MCF 10A (cell line): ENCODE measurements at regions of chr3 and their contacts with region 1.

Region 1: GRCh38 chr3:34260271-34261006 is 462.0 kb downstream of the PDCD6IP start:
- DNase-seq: peak; percentile 61
- H3K4me3 Mint-ChIP-seq: no peak overlapping the region
- H3K27ac Mint-ChIP-seq: no peak overlapping the region
- H3K4me1 Mint-ChIP-seq: peaks cover 6% of the 10 kb centered on the region
- H3K27me3 Mint-ChIP-seq: peaks cover 29% of the 10 kb centered on the region
- CTCF ChIP-seq: peak; percentile 45

Region 2: GRCh38 chr3:33883538-33883950 is 376.9 kb before region 1 on chr3:
- CTCF ChIA-PET with region 1: interaction called, 39 read pairs
- POLR2A ChIA-PET with region 1: no interaction called
- intact Hi-C with region 1: loop called (anchors 1 kb)
- DNase-seq: peak; percentile 67
- H3K4me3 Mint-ChIP-seq: no peak overlapping the region
- H3K27ac Mint-ChIP-seq: no peak overlapping the region
- H3K4me1 Mint-ChIP-seq: peaks cover 9% of the 10 kb centered on the region
- H3K27me3 Mint-ChIP-seq: peaks cover 21% of the 10 kb centered on the region
- CTCF ChIP-seq: peak; percentile 70

Region 3: GRCh38 chr3:34046154-34046553 is 214.3 kb before region 1 on chr3:
- CTCF ChIA-PET with region 1: no interaction called
- POLR2A ChIA-PET with region 1: no interaction called
- intact Hi-C with region 1: no loop called
- DNase-seq: no peak
- H3K4me3 Mint-ChIP-seq: no peak overlapping the region
- H3K27ac Mint-ChIP-seq: no peak overlapping the region
- H3K4me1 Mint-ChIP-seq: no peaks in the 10 kb centered on the region
- H3K27me3 Mint-ChIP-seq: peaks cover 14% of the 10 kb centered on the region
- CTCF ChIP-seq: no peak

Region 4: DNA sequence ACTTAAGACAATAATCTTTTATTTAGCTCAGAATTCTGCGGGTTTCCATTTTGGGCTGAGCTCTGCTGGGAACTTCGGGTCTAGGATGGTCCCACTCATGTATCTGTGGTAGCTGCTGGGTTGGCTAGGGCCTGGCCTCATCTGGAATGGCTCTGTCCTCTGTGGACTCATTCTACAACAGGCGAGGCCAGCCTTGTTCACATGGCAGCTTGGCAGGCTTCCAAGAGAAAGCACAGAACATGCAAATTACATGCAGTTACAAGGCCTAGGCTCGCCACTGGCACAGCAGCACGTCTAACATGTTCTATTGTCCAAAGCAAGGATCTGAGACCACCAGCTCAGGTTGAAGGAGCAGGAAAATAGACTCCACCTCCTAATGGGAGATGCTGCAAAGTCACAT is 30.6 kb before region 1 on chr3:
- CTCF ChIA-PET with region 1: interaction called, 12 read pairs
- POLR2A ChIA-PET with region 1: no interaction called
- intact Hi-C with region 1: no loop called
- DNase-seq: no peak
- H3K4me3 Mint-ChIP-seq: no peak overlapping the region
- H3K27ac Mint-ChIP-seq: no peak overlapping the region
- H3K4me1 Mint-ChIP-seq: no peaks in the 10 kb centered on the region
- H3K27me3 Mint-ChIP-seq: no peaks in the 10 kb centered on the region
- CTCF ChIP-seq: no peak

Region 5: GRCh38 chr3:34248352-34248751 is 12.1 kb before region 1 on chr3:
- CTCF ChIA-PET with region 1: interaction called, 22 read pairs
- POLR2A ChIA-PET with region 1: no interaction called
- intact Hi-C with region 1: no loop called
- DNase-seq: no peak
- H3K4me3 Mint-ChIP-seq: no peak overlapping the region
- H3K27ac Mint-ChIP-seq: no peak overlapping the region
- H3K4me1 Mint-ChIP-seq: no peaks in the 10 kb centered on the region
- H3K27me3 Mint-ChIP-seq: no peaks in the 10 kb centered on the region
- CTCF ChIP-seq: no peak

Region 6: GRCh38 chr3:34464646-34465045 is 204.2 kb after region 1 on chr3:
- CTCF ChIA-PET with region 1: no interaction called
- POLR2A ChIA-PET with region 1: no interaction called
- intact Hi-C with region 1: no loop called
- DNase-seq: no peak
- H3K4me3 Mint-ChIP-seq: no peak overlapping the region
- H3K27ac Mint-ChIP-seq: no peak overlapping the region
- H3K4me1 Mint-ChIP-seq: no peaks in the 10 kb centered on the region
- H3K27me3 Mint-ChIP-seq: no peaks in the 10 kb centered on the region
- CTCF ChIP-seq: no peak

Region 7: GRCh38 chr3:34683851-34684250 is 423.4 kb after region 1 on chr3:
- CTCF ChIA-PET with region 1: interaction called, 135 read pairs
- POLR2A ChIA-PET with region 1: interaction called, 4 read pairs
- intact Hi-C with region 1: loop called (anchors 1 kb)
- DNase-seq: peak; percentile 70
- H3K4me3 Mint-ChIP-seq: no peak overlapping the region
- H3K27ac Mint-ChIP-seq: no peak overlapping the region
- H3K4me1 Mint-ChIP-seq: no peaks in the 10 kb centered on the region
- H3K27me3 Mint-ChIP-seq: no peaks in the 10 kb centered on the region
- CTCF ChIP-seq: peak; percentile 61